Endothelial cell of umbilical vein (primary cell): ENCODE measurements at regions of chr1 and their contacts with region 1.

Region 1: DNA sequence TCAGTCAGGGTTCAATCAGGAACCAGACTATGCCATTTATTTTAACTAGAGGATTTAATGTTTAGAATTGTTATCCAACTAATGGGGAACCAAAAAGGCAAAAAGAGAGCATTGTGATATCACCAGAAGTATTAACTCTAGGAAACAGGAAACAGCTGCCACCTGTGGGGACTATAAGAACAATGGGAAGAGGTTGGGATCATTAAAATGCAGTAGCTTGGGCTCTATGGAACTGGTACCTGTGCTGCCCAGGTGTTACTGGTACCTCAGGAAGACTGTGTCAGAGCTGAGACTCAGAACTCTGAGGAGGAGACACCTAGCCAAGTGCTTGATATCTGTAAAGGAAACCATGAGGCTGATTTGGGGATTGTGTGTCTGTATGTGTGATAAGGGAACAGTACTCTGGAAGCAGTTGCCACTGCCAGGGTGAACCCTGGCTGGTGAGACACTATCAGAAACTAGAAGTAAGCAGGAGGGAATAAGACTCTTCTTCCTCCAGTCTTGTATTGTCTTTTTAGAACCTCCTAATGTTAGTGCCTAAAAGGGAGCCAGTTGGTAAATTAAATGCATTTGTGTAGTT is 49.4 kb downstream of the MAN1A2 start:
- DNase-seq: peak; percentile 28
- H3K4me3 ChIP-seq: no peak overlapping the region
- H3K27ac ChIP-seq: no peak overlapping the region
- H3K4me1 ChIP-seq: peaks cover 5% of the 10 kb centered on the region
- H3K27me3 ChIP-seq: no peaks in the 10 kb centered on the region
- CTCF ChIP-seq: no peak
- POLR2A ChIP-seq: no peak

Region 2: DNA sequence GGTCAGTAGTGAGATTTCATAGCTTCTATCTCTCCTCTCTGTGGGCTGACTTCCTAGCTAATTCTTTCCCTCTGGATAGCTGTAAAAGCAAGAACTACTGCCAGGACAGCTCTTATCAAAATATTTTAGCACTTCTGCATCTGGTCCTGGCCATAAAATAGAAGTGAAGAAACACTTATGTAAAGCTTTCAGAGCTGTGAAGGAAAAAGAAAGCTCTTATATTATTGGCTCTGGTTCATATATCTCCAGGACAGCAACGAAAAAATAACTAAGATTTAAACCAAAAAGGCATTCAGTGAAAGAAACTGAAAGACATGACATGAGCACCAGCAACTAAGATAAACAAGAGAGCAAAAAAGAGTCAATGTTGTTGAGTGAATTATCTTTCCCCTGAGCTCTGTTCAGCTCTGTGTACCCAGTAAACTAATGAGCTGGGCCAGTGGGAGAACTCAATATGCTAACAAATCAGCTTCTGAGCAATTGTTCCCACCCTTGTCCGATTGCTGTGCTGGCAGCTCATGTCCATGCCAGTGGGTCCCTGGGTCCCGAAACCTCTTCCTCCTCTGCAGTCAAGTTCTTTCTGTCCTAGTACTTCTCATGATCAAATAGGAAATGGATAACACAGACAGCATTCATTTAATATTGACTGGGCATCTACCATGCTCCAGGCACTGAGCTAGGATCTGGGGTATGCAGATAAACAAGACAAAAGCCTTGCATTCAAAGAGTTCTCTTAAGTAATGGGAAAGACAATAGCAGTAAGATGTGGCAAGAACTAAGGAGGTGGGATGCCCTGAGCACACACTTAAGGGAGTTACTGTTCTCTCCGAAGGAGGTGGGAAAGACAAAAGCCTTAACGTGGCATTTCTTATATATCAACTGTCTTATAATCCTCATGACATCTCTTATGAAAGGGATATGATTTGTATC is 94.7 kb before region 1 on chr1:
- CTCF ChIA-PET with region 1: no interaction called
- POLR2A ChIA-PET with region 1: no interaction called
- dilution Hi-C with region 1: no loop called
- intact Hi-C with region 1: no loop called
- DNase-seq: no peak
- H3K4me3 ChIP-seq: no peak overlapping the region
- H3K27ac ChIP-seq: no peak overlapping the region
- H3K4me1 ChIP-seq: no peaks in the 10 kb centered on the region
- H3K27me3 ChIP-seq: peaks cover 5 to 10% of the 10 kb centered on the region in 2 experiments
- CTCF ChIP-seq: no peak
- POLR2A ChIP-seq: no peak

Region 3: GRCh38 chr1:117453958-117454357 is 37.3 kb after region 1 on chr1:
- CTCF ChIA-PET with region 1: no interaction called
- POLR2A ChIA-PET with region 1: no interaction called
- dilution Hi-C with region 1: no loop called
- intact Hi-C with region 1: loop called (anchors 5 kb)
- DNase-seq: no peak
- H3K4me3 ChIP-seq: no peak overlapping the region
- H3K27ac ChIP-seq: no peak overlapping the region
- H3K4me1 ChIP-seq: peaks cover 5% of the 10 kb centered on the region
- H3K27me3 ChIP-seq: no peaks in the 10 kb centered on the region
- CTCF ChIP-seq: no peak
- POLR2A ChIP-seq: no peak